ENCODE measurements at regions of chrX and their contacts with region 1.

Region 1: DNA sequence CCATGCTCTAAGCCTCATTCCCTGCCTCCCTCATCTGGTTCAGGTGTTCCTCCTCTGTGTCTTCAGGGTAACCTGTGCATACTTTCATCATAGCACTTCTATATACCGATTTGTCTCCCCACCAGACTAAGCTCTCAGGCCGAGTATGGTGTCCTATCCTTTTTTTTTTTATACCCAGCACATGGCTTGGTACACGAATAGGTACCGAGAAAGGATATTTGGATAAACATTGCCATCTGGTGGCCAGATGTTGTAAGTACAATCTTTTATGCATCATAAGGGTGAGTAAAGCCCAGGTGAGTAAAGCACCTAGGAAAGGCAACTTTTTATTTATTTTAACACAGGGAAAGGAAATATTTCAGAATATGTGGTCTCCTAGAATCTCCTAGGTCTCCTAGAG is 68.4 kb downstream of the MID2 start:
- DNase-seq: no peak
- ATAC-seq: no peak
- H3K4me3 Mint-ChIP-seq: no peak overlapping the region
- H3K27ac Mint-ChIP-seq: no peak overlapping the region
- H3K4me1 Mint-ChIP-seq: no peaks in the 10 kb centered on the region
- H3K27me3 Mint-ChIP-seq: peaks cover 8% of the 10 kb centered on the region
- CTCF ChIP-seq: no peak

Region 2: GRCh38 chrX:106874075-106874474 is 1020.0 kb before region 1 on chrX:
- CTCF ChIA-PET with region 1: interaction called, 4 read pairs
- POLR2A ChIA-PET with region 1: no interaction called
- intact Hi-C with region 1: loop called (anchors 1 kb)
- DNase-seq: no peak
- ATAC-seq: no peak
- H3K4me3 Mint-ChIP-seq: no peak overlapping the region
- H3K27ac Mint-ChIP-seq: no peak overlapping the region
- H3K4me1 Mint-ChIP-seq: no peaks in the 10 kb centered on the region
- H3K27me3 Mint-ChIP-seq: no peaks in the 10 kb centered on the region
- CTCF ChIP-seq: no peak

Region 3: GRCh38 chrX:107000013-107000515 is 894.0 kb before region 1 on chrX and contains the start of gene MORC4:
- CTCF ChIA-PET with region 1: no interaction called
- POLR2A ChIA-PET with region 1: no interaction called
- intact Hi-C with region 1: loop called (anchors 1 kb)
- DNase-seq: peak; percentile 42
- ATAC-seq: peak; percentile 88
- H3K4me3 Mint-ChIP-seq: peak within 1 kb of the TSS; percentile 89
- H3K27ac Mint-ChIP-seq: no peak within 1 kb of the TSS
- H3K4me1 Mint-ChIP-seq: peaks cover 10% of the 10 kb centered on the region
- H3K27me3 Mint-ChIP-seq: no peaks in the 10 kb centered on the region
- CTCF ChIP-seq: no peak
- total RNA-seq, gene MORC4: 3.7 and 4.1 TPM in 2 replicates

Region 4: DNA sequence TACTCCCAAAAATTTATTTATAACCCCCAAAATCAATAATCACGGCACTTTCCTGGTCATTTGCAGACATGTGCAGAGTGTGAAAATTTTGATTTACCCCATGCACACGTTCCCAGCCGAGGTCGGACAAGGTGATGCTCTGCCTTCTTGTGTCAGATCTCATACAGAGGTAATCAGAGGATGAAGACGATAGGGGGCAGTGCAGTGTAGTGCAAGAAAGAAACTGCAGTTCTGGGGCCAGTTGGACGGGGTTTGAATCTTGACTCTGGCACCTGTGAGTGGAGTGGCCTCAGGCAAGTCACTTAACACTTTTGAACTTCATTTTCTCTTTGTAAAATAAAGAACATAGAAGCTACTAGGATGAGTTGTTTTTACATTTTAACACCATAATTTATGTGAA is 356.2 kb before region 1 on chrX:
- CTCF ChIA-PET with region 1: no interaction called
- POLR2A ChIA-PET with region 1: no interaction called
- intact Hi-C with region 1: loop called (anchors 5 kb)
- DNase-seq: no peak
- ATAC-seq: no peak
- H3K4me3 Mint-ChIP-seq: no peak overlapping the region
- H3K27ac Mint-ChIP-seq: no peak overlapping the region
- H3K4me1 Mint-ChIP-seq: peaks cover 5% of the 10 kb centered on the region
- H3K27me3 Mint-ChIP-seq: no peaks in the 10 kb centered on the region
- CTCF ChIP-seq: no peak

Region 5: DNA sequence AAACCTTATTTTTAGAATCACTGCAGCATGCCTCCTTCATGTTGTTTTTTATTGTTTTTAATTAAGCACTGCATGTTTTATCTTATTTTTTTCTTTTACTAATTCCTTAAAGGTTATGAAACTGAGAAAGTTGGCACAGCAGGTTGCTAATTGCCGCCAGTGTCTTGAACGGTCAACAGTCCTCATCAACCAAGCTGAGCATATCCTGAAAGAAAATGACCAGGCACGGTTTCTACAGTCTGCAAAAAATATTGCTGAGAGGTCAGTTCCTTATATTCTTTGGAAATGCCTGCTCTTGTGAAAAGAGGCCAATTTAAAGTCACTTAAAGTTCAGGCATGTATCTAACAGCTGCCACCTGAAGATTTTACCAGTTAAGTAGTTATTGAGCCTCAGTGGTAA is 11.3 kb after region 1 on chrX:
- CTCF ChIA-PET with region 1: no interaction called
- POLR2A ChIA-PET with region 1: no interaction called
- intact Hi-C with region 1: no loop called
- DNase-seq: no peak
- ATAC-seq: no peak
- H3K4me3 Mint-ChIP-seq: no peak overlapping the region
- H3K27ac Mint-ChIP-seq: no peak overlapping the region
- H3K4me1 Mint-ChIP-seq: no peaks in the 10 kb centered on the region
- H3K27me3 Mint-ChIP-seq: peaks cover 2% of the 10 kb centered on the region
- CTCF ChIP-seq: no peak

Region 6: GRCh38 chrX:108070891-108071290 is 176.9 kb after region 1 on chrX:
- CTCF ChIA-PET with region 1: no interaction called
- POLR2A ChIA-PET with region 1: no interaction called
- intact Hi-C with region 1: loop called (anchors 2 kb)
- DNase-seq: no peak
- ATAC-seq: no peak
- H3K4me3 Mint-ChIP-seq: no peak overlapping the region
- H3K27ac Mint-ChIP-seq: no peak overlapping the region
- H3K4me1 Mint-ChIP-seq: peaks cover 3% of the 10 kb centered on the region
- H3K27me3 Mint-ChIP-seq: no peaks in the 10 kb centered on the region
- CTCF ChIP-seq: no peak

Region 7: GRCh38 chrX:108699368-108699767 is 805.3 kb after region 1 on chrX:
- CTCF ChIA-PET with region 1: no interaction called
- POLR2A ChIA-PET with region 1: no interaction called
- intact Hi-C with region 1: no loop called
- DNase-seq: no peak
- ATAC-seq: no peak
- H3K4me3 Mint-ChIP-seq: no peak overlapping the region
- H3K27ac Mint-ChIP-seq: no peak overlapping the region
- H3K4me1 Mint-ChIP-seq: no peaks in the 10 kb centered on the region
- H3K27me3 Mint-ChIP-seq: no peaks in the 10 kb centered on the region
- CTCF ChIP-seq: no peak